ENCODE measurements at regions of chr2 and their contacts with region 1.

Region 1: DNA sequence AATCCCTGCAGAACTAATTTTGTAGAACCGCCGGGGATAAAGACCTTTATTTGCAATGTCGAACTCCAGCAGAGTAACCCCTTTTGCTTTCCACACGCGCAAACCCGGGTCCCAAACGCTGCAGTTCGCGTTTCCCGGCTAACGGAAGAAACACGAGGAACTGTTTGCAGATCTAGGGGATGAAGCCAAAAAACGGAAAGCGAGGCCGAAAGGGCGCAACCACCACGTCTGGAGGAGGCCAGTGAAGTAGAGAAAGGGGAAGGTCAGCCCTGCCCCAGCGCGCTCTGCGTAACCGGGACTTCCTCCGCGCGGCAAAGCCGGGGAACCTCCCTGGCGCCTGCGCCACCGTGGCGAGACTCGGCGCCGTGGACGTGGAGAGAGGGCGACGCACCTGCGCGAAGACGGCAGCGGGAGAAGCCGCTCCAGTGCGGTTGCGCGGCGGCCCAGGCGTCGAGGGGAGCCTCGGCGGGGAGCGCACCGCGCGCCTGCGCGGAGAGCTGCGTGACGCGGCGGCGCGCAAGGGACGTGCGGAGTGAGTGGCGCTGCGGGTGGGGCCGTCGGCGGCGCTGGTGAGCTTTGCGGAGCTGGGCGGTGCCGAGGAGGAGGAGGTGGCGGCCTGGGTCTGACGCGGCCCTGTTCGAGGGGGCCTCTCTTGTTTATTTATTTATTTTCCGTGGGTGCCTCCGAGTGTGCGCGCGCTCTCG is at the start of gene PPP1CB:
- DNase-seq: peak; percentile 94
- H3K4me3 Mint-ChIP-seq: peak within 1 kb of the TSS; percentile 91
- H3K27ac Mint-ChIP-seq: peak within 1 kb of the TSS; percentile 95
- H3K4me1 Mint-ChIP-seq: peaks cover 50% of the 10 kb centered on the region
- H3K27me3 Mint-ChIP-seq: no peaks in the 10 kb centered on the region
- total RNA-seq, gene PPP1CB: 235 to 239 TPM

Region 2: DNA sequence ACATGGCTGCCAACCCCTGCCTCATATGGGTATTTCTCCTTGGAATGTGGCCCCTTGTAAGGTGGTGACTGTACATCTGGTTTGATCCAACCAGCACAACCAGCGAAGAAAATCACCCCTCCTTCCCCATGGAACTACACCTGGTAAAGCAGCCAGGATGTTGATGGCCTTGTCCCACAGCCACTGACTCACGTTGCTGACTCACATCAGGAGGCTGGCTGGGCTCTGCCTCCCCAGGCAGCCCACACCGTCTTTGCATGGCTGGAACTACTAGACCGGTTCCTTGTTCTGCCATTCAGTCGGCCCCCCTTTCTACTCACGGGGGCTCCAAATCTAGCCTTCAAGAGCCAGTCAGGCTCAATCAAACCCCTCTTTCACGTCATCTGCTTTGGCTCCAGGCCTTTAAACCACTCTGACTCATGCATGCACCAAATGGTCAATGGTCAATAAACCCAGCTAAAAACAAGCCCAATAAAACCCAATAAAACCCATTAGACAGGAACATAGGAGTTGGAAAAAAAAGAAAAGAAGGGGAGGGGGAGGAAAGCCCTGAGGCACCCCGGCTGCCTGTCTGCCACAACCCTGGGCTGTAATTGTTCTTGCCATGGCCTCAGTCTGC is 140.7 kb before region 1 on chr2:
- CTCF ChIA-PET with region 1: interaction called, 6 read pairs
- intact Hi-C with region 1: loop called (anchors 1 kb)
- DNase-seq: peak; percentile 70
- H3K4me3 Mint-ChIP-seq: no peak overlapping the region
- H3K27ac Mint-ChIP-seq: peak overlapping the region; percentile 46
- H3K4me1 Mint-ChIP-seq: peaks cover 25% of the 10 kb centered on the region
- H3K27me3 Mint-ChIP-seq: no peaks in the 10 kb centered on the region

Region 3: GRCh38 chr2:28681158-28681571 is 70.2 kb before region 1 on chr2:
- CTCF ChIA-PET with region 1: no interaction called
- intact Hi-C with region 1: loop called (anchors 1 kb)
- DNase-seq: peak; percentile 82
- H3K4me3 Mint-ChIP-seq: peak overlapping the region; percentile 33
- H3K27ac Mint-ChIP-seq: peak overlapping the region; percentile 86
- H3K4me1 Mint-ChIP-seq: peaks cover 35% of the 10 kb centered on the region
- H3K27me3 Mint-ChIP-seq: no peaks in the 10 kb centered on the region

Region 4: GRCh38 chr2:28810384-28811285 is 59.2 kb after region 1 on chr2 and contains the start of gene SPDYA:
- CTCF ChIA-PET with region 1: no interaction called
- intact Hi-C with region 1: loop called (anchors 1 kb)
- DNase-seq: peak; percentile 82
- H3K4me3 Mint-ChIP-seq: peak within 1 kb of the TSS; percentile 75
- H3K27ac Mint-ChIP-seq: no peak within 1 kb of the TSS
- H3K4me1 Mint-ChIP-seq: peaks cover 11% of the 10 kb centered on the region
- H3K27me3 Mint-ChIP-seq: no peaks in the 10 kb centered on the region
- total RNA-seq, gene SPDYA: 1.8 to 2.0 TPM

Region 5: DNA sequence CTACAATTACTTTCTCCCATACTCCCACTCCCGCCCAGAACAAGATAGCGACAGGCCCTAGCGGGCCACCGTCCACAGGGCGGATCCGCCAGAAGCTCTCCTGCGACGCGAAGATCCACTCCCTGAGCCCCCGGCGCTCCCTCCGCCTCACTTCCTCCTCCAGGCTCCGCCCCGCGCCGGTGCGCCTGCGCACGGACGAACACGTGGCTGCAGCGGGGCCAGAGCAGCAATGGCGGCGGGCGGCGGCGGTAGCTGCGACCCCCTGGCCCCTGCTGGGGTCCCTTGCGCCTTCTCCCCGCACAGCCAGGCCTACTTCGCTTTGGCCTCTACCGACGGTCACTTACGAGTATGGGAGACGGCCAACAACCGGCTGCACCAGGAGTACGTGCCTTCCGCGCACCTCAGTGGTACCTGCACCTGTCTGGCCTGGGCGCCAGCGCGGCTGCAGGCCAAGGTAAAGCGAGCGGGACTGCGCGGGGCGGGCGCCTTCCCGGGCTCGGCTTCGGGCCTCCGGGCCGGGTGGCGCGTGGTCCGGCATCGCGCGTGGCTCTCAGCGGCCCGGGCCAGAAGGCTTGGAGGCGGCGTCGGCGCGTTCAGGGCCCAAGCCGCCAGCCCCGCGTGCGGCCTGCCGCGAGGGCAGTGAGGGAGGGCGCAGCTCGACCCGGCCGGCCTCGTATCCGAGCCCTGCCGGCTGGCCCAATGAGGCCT is 143.2 kb after region 1 on chr2 and contains the start of gene WDR43:
- CTCF ChIA-PET with region 1: no interaction called
- intact Hi-C with region 1: loop called (anchors 1 kb)
- DNase-seq: peak; percentile 97
- H3K4me3 Mint-ChIP-seq: peak within 1 kb of the TSS; percentile 100
- H3K27ac Mint-ChIP-seq: peak within 1 kb of the TSS; percentile 97
- H3K4me1 Mint-ChIP-seq: peaks cover 34% of the 10 kb centered on the region
- H3K27me3 Mint-ChIP-seq: no peaks in the 10 kb centered on the region
- total RNA-seq, gene WDR43: 76.5 to 78.7 TPM